ENCODE measurements at regions of chr7 and their contacts with region 1.

Region 1: GRCh38 chr7:11009631-11010030 is 36.0 kb downstream of the PHF14 start:
- DNase-seq: no peak
- H3K4me3 ChIP-seq: no peak overlapping the region
- H3K27ac ChIP-seq: no peak overlapping the region
- H3K4me1 ChIP-seq: no peaks in the 10 kb centered on the region
- H3K27me3 ChIP-seq: no peaks in the 10 kb centered on the region

Region 2: DNA sequence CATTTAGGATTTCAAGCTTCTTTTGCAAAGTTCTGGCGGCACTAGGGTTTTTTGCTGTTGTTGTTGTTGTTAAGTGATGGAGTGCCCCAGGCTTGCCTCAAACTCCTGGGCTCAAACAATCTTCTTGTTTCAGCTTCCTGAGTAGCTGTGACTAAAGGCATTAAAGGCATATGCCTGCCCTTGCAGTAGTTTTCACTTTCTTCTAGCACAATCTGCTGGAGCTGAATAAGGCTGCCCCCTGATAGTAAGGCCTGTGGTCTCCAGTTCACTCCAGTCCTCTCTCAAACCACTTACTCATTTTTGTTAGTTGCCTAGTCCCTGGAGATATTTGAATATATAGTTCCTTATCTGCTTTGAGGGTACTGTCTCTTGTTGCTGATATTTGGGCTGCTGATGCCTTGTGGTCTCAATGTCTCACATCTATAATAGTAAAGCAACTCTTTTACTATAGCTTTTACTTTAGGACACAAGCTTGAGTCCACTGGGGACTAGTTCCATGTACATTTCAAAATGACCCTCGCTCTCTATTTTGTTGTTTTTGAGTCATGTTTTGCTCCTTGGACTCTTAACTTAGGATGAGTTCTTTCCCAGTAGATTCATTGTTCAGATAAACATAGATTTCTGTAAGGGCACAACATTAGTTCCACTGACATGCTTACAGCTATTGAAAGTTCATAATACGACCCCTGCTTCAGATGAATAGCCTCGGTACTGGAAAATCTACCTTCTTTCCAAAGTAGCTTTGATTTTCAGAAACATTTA is 10.5 kb before region 1 on chr7:
- CTCF ChIA-PET with region 1: interaction called, 10 read pairs
- POLR2A ChIA-PET with region 1: no interaction called
- DNase-seq: peak in 2 of 3 donors; percentile 40 to 63
- H3K4me3 ChIP-seq: no peak overlapping the region
- H3K27ac ChIP-seq: no peak overlapping the region
- H3K4me1 ChIP-seq: peaks cover 0 to 3% (median under 1%) of the 10 kb centered on the region in 4 experiments
- H3K27me3 ChIP-seq: no peaks in the 10 kb centered on the region

Measured in common myeloid progenitor, CD34-positive (primary cell).